Ovary (tissue), 10 donors: ENCODE measurements at regions of chr7 and their contacts with region 1.

Region 1: DNA sequence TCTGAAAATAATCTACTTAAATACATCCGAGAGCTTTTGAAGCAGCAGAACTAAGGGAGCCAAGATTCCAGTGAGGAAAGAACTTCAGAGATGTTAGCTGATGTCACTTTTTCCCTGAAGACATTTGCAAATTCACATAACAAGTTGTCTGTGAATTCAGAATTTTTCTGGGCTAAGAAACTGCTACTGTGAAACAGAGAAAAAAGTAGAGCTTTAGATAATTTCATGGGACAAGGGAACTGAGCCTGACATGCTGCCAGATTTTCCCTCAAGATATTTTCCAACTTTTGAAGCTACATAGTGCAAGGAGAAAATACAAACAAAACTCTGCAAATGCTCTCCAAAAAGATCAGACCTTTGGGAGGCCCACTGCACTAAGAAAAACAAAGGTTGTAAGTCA is 484.2 kb downstream of the ANKRD7 start:
- DNase-seq: no peak
- H3K4me3 ChIP-seq: no peak overlapping the region
- H3K27ac ChIP-seq: no peak overlapping the region
- H3K4me1 ChIP-seq: no peaks in the 10 kb centered on the region
- H3K27me3 ChIP-seq: no peaks in the 10 kb centered on the region
- CTCF ChIP-seq: no peak
- EP300 ChIP-seq: no peak
- POLR2A ChIP-seq: no peak

Region 2: DNA sequence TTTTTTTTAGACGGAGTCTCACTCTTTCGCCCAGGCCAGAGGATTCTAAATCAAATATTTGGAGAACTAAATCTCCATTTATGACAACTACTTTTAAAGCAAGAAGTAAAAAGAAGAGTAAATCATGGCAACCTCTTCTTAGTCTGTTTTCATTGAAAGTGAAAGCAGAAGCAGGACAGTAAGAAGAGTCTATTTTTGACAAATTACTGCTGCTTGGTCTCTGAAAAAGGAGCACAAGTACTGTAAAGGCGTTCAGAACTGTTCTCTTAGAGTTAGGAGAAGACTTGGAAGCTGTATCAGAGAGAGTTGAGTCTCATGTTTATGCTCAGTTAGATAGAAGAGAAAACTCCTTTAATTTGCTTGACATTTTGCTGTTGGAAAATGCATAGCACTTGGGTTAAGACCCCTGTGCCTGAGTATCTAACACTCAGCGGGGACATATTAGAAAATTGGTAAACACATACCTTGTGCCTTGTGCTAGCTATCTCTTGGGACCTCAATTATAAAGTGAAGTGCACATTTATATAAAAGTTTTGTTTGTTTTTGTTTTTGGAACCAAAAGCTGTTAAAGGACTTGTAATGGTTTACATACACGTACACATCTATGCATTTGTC is 51.2 kb before region 1 on chr7:
- intact Hi-C with region 1: loop called in 1 of 4 experiments (anchors 5 kb)
- DNase-seq: no peak
- H3K4me3 ChIP-seq: no peak overlapping the region
- H3K27ac ChIP-seq: no peak overlapping the region
- H3K4me1 ChIP-seq: no peaks in the 10 kb centered on the region
- H3K27me3 ChIP-seq: no peaks in the 10 kb centered on the region
- CTCF ChIP-seq: no peak
- EP300 ChIP-seq: no peak
- POLR2A ChIP-seq: no peak